ENCODE measurements at regions of chr6 and their contacts with region 1.

Region 1: DNA sequence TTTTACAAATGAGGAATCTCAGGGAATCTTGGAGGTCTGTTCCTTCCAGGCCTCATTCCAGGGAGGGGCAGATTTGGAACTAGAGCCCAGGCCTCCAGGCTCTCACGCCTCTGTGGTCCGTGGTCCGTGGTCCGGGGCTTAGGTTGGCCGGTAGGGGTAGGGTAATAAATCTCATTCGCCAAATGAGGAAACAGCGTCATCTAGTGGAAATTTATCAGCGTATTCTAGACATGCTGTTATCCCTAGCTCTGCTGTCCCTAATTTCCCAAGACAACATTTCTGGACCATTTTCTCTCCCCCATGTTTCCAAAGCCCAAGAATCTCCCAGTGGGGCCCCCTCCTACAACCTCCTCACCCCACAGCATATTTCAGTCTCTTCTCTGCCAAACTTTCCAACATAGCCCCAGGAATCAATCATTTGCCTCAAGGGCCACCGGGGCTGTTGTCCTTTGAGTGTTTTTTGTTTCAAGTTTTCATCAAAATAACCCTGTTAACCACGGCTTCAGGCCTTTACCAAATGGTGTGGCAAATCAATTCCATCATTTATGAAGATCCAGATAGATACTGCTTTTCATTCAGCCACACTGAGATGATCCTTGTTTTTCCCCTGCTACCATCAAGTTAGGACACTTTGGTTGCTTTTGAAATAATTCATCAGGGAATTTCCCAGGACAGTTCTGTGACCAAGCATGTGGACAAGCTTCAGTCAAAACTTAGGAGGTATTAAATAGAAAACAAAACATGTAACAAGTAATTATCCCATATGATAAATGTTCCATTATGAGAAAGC is 126.8 kb downstream of the ALDH8A1 start:
- DNase-seq: peak; percentile 41 to 77
- H3K4me3 ChIP-seq: no peak overlapping the region
- H3K27ac ChIP-seq: no peak overlapping the region
- H3K4me1 ChIP-seq: peaks cover 6% of the 10 kb centered on the region
- H3K27me3 ChIP-seq: no peaks in the 10 kb centered on the region
- CTCF ChIP-seq: peak; percentile 93

Region 2: GRCh38 chr6:134161036-134161435 is 662.1 kb before region 1 on chr6:
- CTCF ChIA-PET with region 1: interaction called, 3 read pairs
- POLR2A ChIA-PET with region 1: no interaction called
- intact Hi-C with region 1: loop called (anchors 1 kb)
- DNase-seq: peak in 1 of 2 experiments; percentile 77
- H3K4me3 ChIP-seq: no peak overlapping the region
- H3K27ac ChIP-seq: peak overlapping the region; percentile 59
- H3K4me1 ChIP-seq: peaks cover 20% of the 10 kb centered on the region
- H3K27me3 ChIP-seq: no peaks in the 10 kb centered on the region
- CTCF ChIP-seq: no peak

Region 3: DNA sequence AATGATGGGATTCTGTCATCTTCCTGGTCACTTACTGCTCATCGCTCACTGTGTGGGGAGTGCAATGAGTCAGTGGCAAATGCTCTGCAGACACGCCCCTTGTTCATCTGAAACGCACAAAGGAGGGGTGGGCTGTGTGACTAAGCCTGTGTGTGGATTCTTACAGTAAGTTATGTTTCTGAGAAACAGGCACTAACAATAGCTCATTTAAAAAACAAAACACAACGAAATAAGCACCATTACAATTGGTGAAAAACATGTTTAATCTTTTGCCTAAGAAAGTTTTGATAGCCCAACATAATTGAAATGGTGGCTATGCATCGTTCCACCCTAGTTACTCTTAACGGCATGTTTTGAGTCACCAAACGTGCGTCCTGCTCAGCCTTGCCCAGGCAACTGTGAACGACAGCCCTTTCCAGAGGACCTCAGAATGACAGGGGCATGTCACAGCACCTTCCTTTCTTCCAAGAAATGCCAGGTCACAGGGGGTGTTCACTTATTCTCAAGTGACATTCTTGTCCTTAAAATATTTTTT is 386.8 kb before region 1 on chr6:
- CTCF ChIA-PET with region 1: no interaction called
- POLR2A ChIA-PET with region 1: no interaction called
- intact Hi-C with region 1: loop called (anchors 5 kb)
- DNase-seq: peak; percentile 75 to 96
- H3K4me3 ChIP-seq: peak overlapping the region; percentile 36; the same call in 1 of the 2 replicates
- H3K27ac ChIP-seq: peak overlapping the region; percentile 85
- H3K4me1 ChIP-seq: peaks cover 29% of the 10 kb centered on the region
- H3K27me3 ChIP-seq: no peaks in the 10 kb centered on the region
- CTCF ChIP-seq: no peak

Region 4: GRCh38 chr6:134590449-134590848 is 232.7 kb before region 1 on chr6:
- CTCF ChIA-PET with region 1: interaction called, 4 read pairs
- POLR2A ChIA-PET with region 1: interaction called, 10 read pairs
- intact Hi-C with region 1: no loop called
- DNase-seq: no peak
- H3K4me3 ChIP-seq: no peak overlapping the region
- H3K27ac ChIP-seq: peak overlapping the region; percentile 66
- H3K4me1 ChIP-seq: peaks cover 15% of the 10 kb centered on the region
- H3K27me3 ChIP-seq: no peaks in the 10 kb centered on the region
- CTCF ChIP-seq: no peak

Region 5: GRCh38 chr6:134666125-134666524 is 157.0 kb before region 1 on chr6:
- CTCF ChIA-PET with region 1: no interaction called
- POLR2A ChIA-PET with region 1: interaction called, 10 read pairs
- intact Hi-C with region 1: no loop called
- DNase-seq: no peak
- H3K4me3 ChIP-seq: no peak overlapping the region
- H3K27ac ChIP-seq: no peak overlapping the region
- H3K4me1 ChIP-seq: peaks cover 5% of the 10 kb centered on the region; the same call in 1 of the 2 replicates
- H3K27me3 ChIP-seq: no peaks in the 10 kb centered on the region
- CTCF ChIP-seq: no peak

Region 6: GRCh38 chr6:134766497-134766896 is 56.6 kb before region 1 on chr6:
- CTCF ChIA-PET with region 1: no interaction called
- POLR2A ChIA-PET with region 1: no interaction called
- intact Hi-C with region 1: no loop called
- DNase-seq: no peak
- H3K4me3 ChIP-seq: no peak overlapping the region
- H3K27ac ChIP-seq: no peak overlapping the region
- H3K4me1 ChIP-seq: no peaks in the 10 kb centered on the region
- H3K27me3 ChIP-seq: no peaks in the 10 kb centered on the region
- CTCF ChIP-seq: no peak

Region 7: GRCh38 chr6:134840086-134840867 is 17.2 kb after region 1 on chr6:
- CTCF ChIA-PET with region 1: no interaction called
- POLR2A ChIA-PET with region 1: interaction called, 10 read pairs
- intact Hi-C with region 1: no loop called
- DNase-seq: no peak
- H3K4me3 ChIP-seq: no peak overlapping the region
- H3K27ac ChIP-seq: no peak overlapping the region
- H3K4me1 ChIP-seq: no peaks in the 10 kb centered on the region
- H3K27me3 ChIP-seq: no peaks in the 10 kb centered on the region
- CTCF ChIP-seq: no peak

Region 8: GRCh38 chr6:134938896-134939295 is 115.8 kb after region 1 on chr6:
- CTCF ChIA-PET with region 1: interaction called, 10 read pairs
- POLR2A ChIA-PET with region 1: interaction called, 5 read pairs
- intact Hi-C with region 1: loop called (anchors 2 kb)
- DNase-seq: no peak
- H3K4me3 ChIP-seq: no peak overlapping the region
- H3K27ac ChIP-seq: no peak overlapping the region
- H3K4me1 ChIP-seq: no peaks in the 10 kb centered on the region
- H3K27me3 ChIP-seq: no peaks in the 10 kb centered on the region
- CTCF ChIP-seq: no peak

Region 9: DNA sequence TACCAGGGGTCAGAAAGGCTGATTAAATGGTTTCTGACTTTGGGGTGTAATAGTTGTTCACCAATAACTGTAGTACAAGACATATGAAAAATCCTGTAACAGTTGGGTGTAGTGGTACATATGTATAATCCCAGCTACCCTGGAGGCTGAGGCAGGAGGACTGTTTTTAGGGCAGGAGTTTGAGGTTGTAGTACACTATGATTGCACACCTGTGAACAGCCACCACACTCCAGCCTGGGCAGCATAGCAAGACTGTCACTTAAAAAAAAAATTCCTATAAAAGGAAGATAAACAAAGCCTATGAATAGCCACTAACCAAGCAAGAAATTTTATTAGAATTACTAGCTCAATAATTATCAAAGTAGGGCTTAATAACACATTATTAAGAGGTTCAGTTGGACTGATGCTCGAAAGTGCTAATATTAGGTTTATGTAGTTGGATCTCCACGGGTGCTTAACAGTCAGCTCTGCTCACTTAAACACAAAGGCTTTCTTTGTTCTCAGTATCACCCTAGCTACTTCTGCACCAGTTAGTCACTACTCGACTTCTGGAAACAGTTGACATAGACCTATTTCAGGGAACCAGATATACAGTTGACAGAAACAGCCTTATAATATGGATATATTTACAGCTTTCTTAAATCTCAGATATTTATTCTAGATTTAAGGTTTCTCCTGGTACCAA is 1314.0 kb after region 1 on chr6:
- CTCF ChIA-PET with region 1: no interaction called
- POLR2A ChIA-PET with region 1: no interaction called
- intact Hi-C with region 1: no loop called
- DNase-seq: peak in 1 of 2 experiments; percentile 24
- H3K4me3 ChIP-seq: no peak overlapping the region
- H3K27ac ChIP-seq: no peak overlapping the region
- H3K4me1 ChIP-seq: no peaks in the 10 kb centered on the region
- H3K27me3 ChIP-seq: no peaks in the 10 kb centered on the region
- CTCF ChIP-seq: no peak